Activated naive CD4-positive, alpha-beta T cell treated with anti-CD3 and anti-CD28 coated beads, Interleukin-2, amount 10 ng/mL, durations not matched to agents 7 days and 5 days (primary cell): ENCODE measurements at regions of chr17 and their contacts with region 1.

Region 1: DNA sequence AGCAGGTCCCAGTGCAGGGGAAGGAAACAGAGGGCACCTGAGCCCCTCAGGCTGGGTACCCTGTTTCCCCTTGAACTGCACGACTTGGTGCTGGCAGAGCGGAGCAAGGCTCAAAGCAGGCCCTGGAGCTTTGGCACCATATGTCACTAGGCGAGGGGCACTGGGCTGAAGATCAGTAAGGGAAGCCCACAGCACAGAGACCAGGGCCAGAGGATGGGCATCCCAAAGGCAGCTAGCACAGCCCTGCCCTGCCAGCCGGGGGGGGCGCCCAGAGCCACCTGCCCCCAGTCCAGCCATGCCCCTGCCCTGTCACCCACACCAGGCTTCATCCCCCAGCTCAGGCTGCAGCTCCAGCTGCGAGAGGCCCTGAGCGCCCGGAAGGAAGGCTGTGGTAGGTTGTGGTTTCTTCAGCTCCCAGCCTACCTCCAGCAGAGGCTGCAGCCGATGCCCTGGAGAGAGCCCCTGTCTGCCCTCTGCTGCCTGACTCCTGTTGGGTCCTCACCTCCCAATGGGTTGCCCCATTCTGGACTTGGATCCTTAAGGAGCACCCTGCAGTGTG is 10.9 kb downstream of the NHERF1 start:
- DNase-seq: peak; percentile 80
- H3K4me3 Mint-ChIP-seq: peak overlapping the region; percentile 68
- H3K27ac Mint-ChIP-seq: peak overlapping the region; percentile 91
- H3K4me1 Mint-ChIP-seq: peaks cover 72% of the 10 kb centered on the region
- H3K27me3 Mint-ChIP-seq: no peaks in the 10 kb centered on the region

Region 2: GRCh38 chr17:74702116-74702871 is 57.0 kb before region 1 on chr17:
- CTCF ChIA-PET with region 1: no interaction called
- DNase-seq: no peak
- H3K4me3 Mint-ChIP-seq: no peak overlapping the region
- H3K27ac Mint-ChIP-seq: peak overlapping the region; percentile 43
- H3K4me1 Mint-ChIP-seq: no peaks in the 10 kb centered on the region
- H3K27me3 Mint-ChIP-seq: peaks cover 64% of the 10 kb centered on the region

Region 3: DNA sequence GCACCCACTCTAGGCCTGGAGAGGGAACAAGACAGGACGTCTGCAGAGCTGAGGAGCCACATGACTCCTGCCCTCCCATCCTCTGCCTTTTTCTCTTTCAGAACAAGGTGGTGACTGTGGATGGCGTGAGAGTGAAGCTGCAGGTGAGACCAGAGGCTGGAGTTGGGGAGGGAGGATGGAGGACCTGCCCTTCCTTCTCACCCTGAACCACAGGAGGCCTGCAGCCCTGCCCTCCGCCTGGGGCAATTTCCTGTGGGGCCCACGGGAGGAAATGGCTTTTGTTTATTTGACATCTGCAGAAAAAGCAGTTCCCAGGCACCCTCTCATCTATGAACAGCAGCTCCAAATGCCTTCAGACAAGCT is 17.2 kb before region 1 on chr17:
- CTCF ChIA-PET with region 1: interaction called, 54 read pairs
- DNase-seq: peak; percentile 85
- H3K4me3 Mint-ChIP-seq: peak overlapping the region; percentile 68
- H3K27ac Mint-ChIP-seq: peak overlapping the region; percentile 98
- H3K4me1 Mint-ChIP-seq: peaks cover 92% of the 10 kb centered on the region
- H3K27me3 Mint-ChIP-seq: no peaks in the 10 kb centered on the region

Region 4: GRCh38 chr17:74748529-74749365 is 10.6 kb before region 1 on chr17 and contains the start of gene NHERF1:
- CTCF ChIA-PET with region 1: interaction called, 54 read pairs
- DNase-seq: peak; percentile 95
- H3K4me3 Mint-ChIP-seq: peak within 1 kb of the TSS; percentile 99
- H3K27ac Mint-ChIP-seq: peak within 1 kb of the TSS; percentile 88
- H3K4me1 Mint-ChIP-seq: peaks cover 64% of the 10 kb centered on the region
- H3K27me3 Mint-ChIP-seq: no peaks in the 10 kb centered on the region

Region 5: DNA sequence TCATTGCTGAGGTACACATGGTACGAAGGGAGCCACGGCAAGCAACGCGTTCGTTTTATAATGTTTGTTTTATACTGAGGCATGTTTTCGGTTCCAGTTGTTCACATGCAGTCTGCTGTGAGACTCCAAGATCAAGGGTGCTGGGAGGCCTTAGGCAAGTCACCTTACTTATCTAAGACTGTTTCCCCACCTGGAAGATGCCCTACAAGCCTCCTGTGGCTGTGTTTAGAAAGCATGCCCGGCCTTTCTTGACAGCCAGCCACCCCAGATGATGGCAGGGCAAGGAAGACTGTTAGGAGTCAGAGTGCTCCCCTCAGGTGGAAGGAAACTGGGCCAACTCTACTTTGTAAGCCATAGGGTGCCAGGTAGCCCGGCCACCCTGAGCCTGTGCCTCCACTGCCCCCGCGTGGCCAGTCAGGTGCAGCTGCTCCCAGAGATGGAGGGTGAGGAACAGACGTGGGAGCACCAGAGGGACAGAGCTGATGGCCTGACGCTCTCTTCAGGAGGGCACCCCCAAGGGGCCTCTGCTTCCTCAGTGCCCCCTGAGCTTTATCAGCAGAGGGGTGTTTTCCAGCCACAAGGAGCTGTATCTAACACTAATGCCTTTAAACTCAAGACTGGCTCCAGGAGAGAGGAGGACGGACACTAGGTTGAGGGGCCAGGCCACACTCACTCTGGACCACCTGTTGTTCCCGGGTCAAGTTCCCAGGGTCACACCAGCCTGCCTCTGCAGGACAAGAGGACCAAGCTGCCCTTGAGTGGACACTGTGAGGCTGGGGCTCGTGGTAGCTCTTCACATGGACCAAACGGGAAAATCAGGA is 11.4 kb after region 1 on chr17:
- CTCF ChIA-PET with region 1: interaction called, 43 read pairs
- DNase-seq: peak; percentile 83
- H3K4me3 Mint-ChIP-seq: no peak overlapping the region
- H3K27ac Mint-ChIP-seq: peak overlapping the region; percentile 80
- H3K4me1 Mint-ChIP-seq: peaks cover 47% of the 10 kb centered on the region
- H3K27me3 Mint-ChIP-seq: no peaks in the 10 kb centered on the region

Region 6: DNA sequence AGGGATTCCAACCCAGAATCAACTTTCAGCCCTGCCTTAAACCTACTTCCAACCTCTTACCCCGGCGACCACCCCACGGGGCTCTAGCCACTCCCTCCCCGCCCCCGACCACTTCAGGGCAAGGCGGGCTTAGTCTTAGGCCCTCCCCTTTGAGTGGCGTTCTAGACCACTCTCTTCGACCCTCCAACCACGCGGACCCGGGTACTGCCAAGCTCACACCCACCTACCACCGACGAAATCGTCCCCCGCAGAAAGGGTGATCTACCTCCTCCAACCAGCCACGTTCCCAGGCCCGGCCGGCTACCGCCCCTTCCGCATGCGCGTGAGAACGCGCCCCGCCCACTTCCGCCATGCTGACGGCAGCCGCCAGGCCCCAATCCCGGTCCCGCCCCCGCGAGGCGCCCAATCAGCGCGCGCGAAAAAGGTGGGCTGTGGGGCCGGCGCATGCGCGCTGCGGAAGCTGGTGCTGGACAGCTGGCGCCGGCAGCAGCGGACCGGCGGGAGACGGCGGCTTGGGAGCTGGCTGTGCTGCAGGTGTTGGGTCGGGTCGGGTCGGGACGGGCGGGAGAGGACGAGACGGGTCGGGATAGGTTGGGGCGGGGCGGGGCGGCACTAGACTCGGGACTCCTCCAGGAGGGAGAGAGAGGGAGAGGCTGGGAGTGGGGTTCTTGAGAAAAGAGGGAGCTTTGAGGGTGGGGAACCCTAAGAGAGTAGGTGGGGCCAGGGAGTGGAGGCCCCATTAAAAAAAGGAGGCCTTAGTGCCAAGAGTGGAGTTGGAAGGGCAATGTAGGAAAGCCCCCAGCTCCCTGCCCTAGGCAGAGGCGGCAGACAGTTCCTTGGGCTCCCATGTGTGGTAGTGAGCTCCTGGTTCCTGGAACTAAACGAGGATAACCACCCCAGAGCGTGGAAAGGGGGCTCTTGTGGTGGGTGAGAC is 17.0 kb after region 1 on chr17 and contains the start of gene NAT9:
- CTCF ChIA-PET with region 1: interaction called, 43 read pairs
- DNase-seq: peak; percentile 99
- H3K4me3 Mint-ChIP-seq: peak within 1 kb of the TSS; percentile 98
- H3K27ac Mint-ChIP-seq: peak within 1 kb of the TSS; percentile 94
- H3K4me1 Mint-ChIP-seq: peaks cover 73% of the 10 kb centered on the region
- H3K27me3 Mint-ChIP-seq: peaks cover 4% of the 10 kb centered on the region